Heart right ventricle (tissue), 16 donors: ENCODE measurements at regions of chr3 and their contacts with region 1.

Region 1: DNA sequence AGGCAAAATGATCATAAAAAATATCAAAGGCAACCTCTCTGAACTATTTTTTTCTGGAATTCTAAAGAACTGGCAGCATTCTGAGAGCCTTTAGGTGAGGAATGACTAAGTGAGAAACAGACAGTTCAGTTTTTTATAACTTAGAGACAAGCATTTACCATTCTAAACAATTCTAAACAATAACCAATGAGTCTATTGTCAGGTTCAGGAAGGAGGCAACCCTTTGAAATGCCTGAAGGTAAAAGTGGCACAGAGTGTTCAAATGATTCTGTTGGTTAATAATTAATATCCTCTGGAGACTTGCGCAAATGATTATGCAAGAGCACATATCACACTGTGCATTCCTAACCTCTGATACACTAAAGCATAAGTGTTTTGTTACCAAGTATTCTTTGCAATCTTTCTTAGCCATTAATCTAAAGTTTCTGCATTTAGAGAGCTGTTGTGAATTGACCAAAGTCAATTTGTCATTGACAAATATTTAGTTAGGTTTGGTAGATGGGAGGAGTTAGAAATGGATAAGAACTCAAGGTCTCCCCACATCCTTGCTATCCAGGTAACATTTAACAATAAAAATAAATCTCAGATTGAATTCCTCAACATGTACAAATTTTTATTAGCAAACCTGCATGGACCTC is 9.2 kb upstream of the TGFBR2 start:
- DNase-seq: no peak
- ATAC-seq: peak in 7 of 8 donors; percentile 39 to 97 (median 84)
- H3K4me3 ChIP-seq: no peak overlapping the region
- H3K27ac ChIP-seq: peak overlapping the region in 9 of 10 donors; percentile 1 to 50 (median 31)
- H3K4me1 ChIP-seq: peaks cover 0 to 21% (median 10%) of the 10 kb centered on the region in 9 donors
- H3K27me3 ChIP-seq: no peaks in the 10 kb centered on the region
- CTCF ChIP-seq: no peak

Region 2: DNA sequence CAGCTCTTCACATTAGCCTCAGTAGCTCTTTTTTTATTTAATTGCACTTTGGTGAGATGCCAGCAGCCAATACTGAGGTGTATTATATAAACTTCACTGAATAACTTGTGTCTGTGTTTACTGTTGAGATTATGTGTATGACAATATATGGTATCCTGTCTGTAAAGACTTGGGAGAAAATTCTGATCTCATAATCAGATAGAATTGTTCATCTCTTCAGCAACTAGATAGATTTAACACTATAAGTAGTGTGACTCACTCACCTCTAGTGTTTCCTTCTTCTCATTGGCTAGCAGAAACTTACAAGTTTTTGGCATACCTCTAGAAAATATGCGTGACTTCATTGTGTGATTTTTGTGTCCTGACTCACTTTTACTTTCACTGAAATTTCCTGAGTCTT is 58.5 kb before region 1 on chr3:
- intact Hi-C with region 1: loop called in 1 of 10 experiments (anchors 10 kb)
- DNase-seq: no peak
- ATAC-seq: no peak
- H3K4me3 ChIP-seq: no peak overlapping the region
- H3K27ac ChIP-seq: peak overlapping the region in 1 of 10 donors; percentile 2
- H3K4me1 ChIP-seq: peaks cover 0 to 13% (median 0%) of the 10 kb centered on the region in 9 donors
- H3K27me3 ChIP-seq: no peaks in the 10 kb centered on the region
- CTCF ChIP-seq: no peak